ENCODE measurements at regions of chr18 and their contacts with region 1.

Region 1: DNA sequence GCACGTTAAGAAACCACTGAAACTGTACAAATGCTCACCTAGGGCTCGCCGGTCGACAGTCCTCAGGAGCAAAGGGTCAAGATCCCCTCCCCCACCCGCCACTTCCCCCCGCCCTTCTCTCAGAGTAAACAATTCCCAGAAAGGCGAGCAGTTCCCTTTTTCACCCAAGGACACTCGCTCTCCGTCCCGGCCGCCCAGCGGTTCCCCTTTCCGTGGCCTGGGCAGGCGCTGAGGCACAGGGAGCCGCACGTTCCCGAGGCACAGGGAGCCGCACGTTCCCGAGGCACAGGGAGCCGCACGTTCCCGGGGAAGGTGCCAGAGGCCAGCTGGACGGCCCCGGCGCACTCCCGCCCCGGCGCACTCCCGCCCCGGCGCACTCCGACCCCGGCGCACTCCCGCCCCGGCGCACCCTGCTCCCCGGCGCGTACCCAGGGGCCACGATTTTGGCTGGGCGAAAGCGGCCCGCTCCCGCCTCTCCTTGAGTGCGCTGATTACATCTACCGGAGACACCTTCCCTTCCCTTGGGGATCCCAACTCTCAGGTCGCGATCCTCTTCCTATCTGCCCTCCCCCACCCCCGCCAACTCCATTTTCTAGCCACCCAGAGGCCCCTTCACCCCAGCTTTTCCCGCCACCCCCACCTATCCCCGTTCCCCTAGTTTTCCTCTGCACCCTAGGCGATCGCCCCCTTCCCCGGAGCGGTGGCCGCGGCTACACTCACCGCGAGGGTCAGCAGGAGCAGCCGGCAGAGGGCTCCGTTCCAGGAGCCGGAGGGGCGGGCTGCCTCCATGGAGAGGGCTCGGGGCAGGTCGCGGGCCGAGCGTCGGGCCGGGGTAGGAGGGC is 817 bp downstream of the DSC2 start:
- DNase-seq: peak; percentile 66 to 82
- ATAC-seq: peak; percentile 84 to 97 (median 88)
- H3K4me3 ChIP-seq: peak overlapping the region; percentile 41 to 76 (median 72)
- H3K27ac ChIP-seq: peak overlapping the region; percentile 87 to 97 (median 90)
- H3K4me1 ChIP-seq: peaks cover 0 to 12% (median 3%) of the 10 kb centered on the region in 9 donors
- H3K27me3 ChIP-seq: peaks cover 0 to 8% (median 0%) of the 10 kb centered on the region in 7 donors
- CTCF ChIP-seq: peak in 3 of 9 donors; percentile 19 to 32 (median 32)

Region 2: DNA sequence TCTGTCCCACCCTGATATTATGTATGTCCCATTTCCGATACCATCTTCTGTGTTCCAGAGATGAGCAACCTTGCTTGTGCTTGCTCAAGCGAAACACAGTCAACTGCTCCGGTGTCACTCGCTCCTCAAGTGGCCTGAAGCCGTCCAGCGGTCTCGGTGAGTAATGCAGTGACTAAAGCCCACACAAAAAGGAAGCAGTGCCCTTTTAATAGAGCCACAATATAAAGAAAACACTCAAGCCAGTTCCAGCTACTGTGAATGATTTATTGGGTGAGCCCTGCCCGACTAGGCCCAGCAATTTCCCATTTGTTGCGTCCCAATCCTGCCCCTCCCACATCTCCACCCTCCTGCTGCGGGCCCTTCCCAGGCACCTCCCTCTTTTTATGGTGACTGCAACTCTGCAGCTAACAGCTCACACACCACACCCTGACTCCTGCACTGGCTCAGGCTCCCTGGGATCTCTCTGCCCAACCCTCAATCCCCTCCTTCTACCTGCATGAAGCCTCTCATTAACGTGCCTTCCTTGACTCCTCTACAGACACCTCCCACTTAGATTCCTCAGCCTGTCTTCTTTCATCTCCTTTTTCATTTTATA is 105.5 kb after region 1 on chr18:
- intact Hi-C with region 1: loop called in 2 of 10 experiments (anchors 10 kb)
- DNase-seq: peak; percentile 39 to 40
- ATAC-seq: peak; percentile 66 to 87 (median 80)
- H3K4me3 ChIP-seq: peak overlapping the region in 4 of 10 donors; percentile 1 to 18 (median 8)
- H3K27ac ChIP-seq: peak overlapping the region in 1 of 10 donors; percentile 39
- H3K4me1 ChIP-seq: peaks cover 0 to 45% (median 5%) of the 10 kb centered on the region in 9 donors
- H3K27me3 ChIP-seq: no peaks in the 10 kb centered on the region
- CTCF ChIP-seq: peak in 1 of 9 donors; percentile 12

Region 3: DNA sequence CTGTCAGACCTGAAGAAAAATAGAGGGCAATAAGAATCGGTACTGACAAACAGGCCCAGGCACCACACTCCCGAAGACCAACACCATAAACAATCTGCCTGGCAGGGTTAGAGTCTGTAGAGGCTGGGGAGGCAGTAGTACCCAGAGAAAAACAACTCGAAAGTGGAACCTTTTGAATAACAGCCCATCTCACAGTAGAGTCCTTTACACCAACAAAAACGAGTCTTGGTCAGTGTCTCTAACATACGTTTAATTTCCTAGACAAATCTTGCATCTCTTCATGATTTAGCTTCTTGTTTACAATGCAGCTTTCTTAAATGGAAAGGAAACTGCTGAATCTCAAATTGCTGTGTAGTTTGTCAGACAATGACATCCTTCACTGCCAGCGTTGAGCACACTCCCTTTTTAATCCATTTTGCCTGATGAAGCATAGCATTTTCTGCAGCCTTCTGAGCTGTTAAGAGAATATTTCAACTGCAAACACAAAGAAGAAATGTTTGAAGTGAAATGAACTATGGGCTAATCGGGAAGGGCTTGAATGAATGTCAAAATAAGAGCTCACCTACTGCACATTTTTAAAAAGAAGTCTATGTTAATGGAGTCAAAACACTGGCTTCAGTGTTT is 143.5 kb after region 1 on chr18:
- intact Hi-C with region 1: loop called in 1 of 10 experiments (anchors 5 kb)
- DNase-seq: no peak
- ATAC-seq: peak in 4 of 8 donors; percentile 12 to 24 (median 17)
- H3K4me3 ChIP-seq: peak overlapping the region in 1 of 10 donors; percentile 25
- H3K27ac ChIP-seq: peak overlapping the region in 9 of 10 donors; percentile 14 to 74 (median 50)
- H3K4me1 ChIP-seq: peaks cover 0 to 59% (median 27%) of the 10 kb centered on the region in 9 donors
- H3K27me3 ChIP-seq: no peaks in the 10 kb centered on the region
- CTCF ChIP-seq: no peak

Region 4: GRCh38 chr18:31274915-31275314 is 173.5 kb after region 1 on chr18:
- intact Hi-C with region 1: loop called in 1 of 10 experiments (anchors 10 kb)
- DNase-seq: peak; percentile 33 to 65
- ATAC-seq: peak in 6 of 8 donors; percentile 81 to 93 (median 90)
- H3K4me3 ChIP-seq: no peak overlapping the region
- H3K27ac ChIP-seq: peak overlapping the region in 8 of 10 donors; percentile 11 to 58 (median 36)
- H3K4me1 ChIP-seq: peaks cover 0 to 27% (median 19%) of the 10 kb centered on the region in 9 donors
- H3K27me3 ChIP-seq: no peaks in the 10 kb centered on the region
- CTCF ChIP-seq: no peak

Region 5: DNA sequence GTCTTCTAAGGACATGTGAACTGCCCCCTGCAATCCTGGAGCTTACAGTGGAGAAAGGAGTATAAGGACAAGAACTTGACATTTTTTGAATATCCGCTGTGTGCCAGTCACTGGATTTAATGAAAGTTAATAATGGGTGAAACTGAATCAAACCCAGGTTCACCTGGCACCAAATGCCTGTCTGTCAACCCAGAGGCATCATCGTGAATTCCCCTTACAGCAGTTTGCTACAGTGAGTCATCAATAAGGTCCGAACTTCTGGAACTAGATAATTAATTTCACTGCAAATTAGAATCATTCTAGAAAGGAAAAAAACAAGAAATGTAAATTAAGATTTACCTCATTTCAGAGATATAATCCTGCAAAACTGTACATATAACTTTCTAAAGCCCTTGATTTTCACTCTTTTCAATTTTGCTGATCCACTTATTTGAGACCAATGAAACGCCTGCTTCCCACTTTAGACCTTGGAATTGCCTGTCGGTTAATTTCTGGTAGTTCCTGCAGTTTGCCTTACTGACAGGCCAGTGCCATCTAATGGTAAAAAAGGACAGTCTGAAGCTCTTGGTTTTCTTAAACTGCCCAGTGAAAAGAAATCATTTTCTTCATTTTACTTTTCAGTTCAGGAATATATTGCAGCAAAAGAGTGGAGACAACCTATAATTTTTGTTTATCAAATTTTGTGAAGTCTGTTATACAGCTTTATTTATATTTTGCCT is 404.8 kb after region 1 on chr18:
- intact Hi-C with region 1: loop called in 3 of 10 experiments (anchors 5 to 10 kb)
- DNase-seq: no peak
- ATAC-seq: peak in 5 of 8 donors; percentile 52 to 74 (median 70)
- H3K4me3 ChIP-seq: no peak overlapping the region
- H3K27ac ChIP-seq: no peak overlapping the region
- H3K4me1 ChIP-seq: peaks cover 0 to 10% (median 0%) of the 10 kb centered on the region in 9 donors
- H3K27me3 ChIP-seq: no peaks in the 10 kb centered on the region
- CTCF ChIP-seq: peak in 8 of 9 donors; percentile 23 to 67 (median 56)

Measured in heart right ventricle (tissue), 16 donors.